ENCODE measurements at regions of chr11 and their contacts with region 1.

Region 1: GRCh38 chr11:129922674-129923073 is 27.3 kb upstream of the NFRKB start:
- DNase-seq: peak; percentile 30
- ATAC-seq: no peak; the same call in 1 of the 2 replicates
- H3K4me3 ChIP-seq: no peak overlapping the region
- H3K27ac ChIP-seq: no peak overlapping the region
- H3K4me1 ChIP-seq: peaks cover 8% of the 10 kb centered on the region
- H3K27me3 ChIP-seq: no peaks in the 10 kb centered on the region
- CTCF ChIP-seq: no peak

Region 2: GRCh38 chr11:129803533-129803932 is 119.1 kb before region 1 on chr11:
- CTCF ChIA-PET with region 1: no interaction called
- POLR2A ChIA-PET with region 1: no interaction called
- intact Hi-C with region 1: no loop called
- DNase-seq: peak; percentile 46
- ATAC-seq: peak; percentile 45
- H3K4me3 ChIP-seq: no peak overlapping the region
- H3K27ac ChIP-seq: peak overlapping the region; percentile 56
- H3K4me1 ChIP-seq: peaks cover 15% of the 10 kb centered on the region
- H3K27me3 ChIP-seq: no peaks in the 10 kb centered on the region
- CTCF ChIP-seq: no peak

Region 3: DNA sequence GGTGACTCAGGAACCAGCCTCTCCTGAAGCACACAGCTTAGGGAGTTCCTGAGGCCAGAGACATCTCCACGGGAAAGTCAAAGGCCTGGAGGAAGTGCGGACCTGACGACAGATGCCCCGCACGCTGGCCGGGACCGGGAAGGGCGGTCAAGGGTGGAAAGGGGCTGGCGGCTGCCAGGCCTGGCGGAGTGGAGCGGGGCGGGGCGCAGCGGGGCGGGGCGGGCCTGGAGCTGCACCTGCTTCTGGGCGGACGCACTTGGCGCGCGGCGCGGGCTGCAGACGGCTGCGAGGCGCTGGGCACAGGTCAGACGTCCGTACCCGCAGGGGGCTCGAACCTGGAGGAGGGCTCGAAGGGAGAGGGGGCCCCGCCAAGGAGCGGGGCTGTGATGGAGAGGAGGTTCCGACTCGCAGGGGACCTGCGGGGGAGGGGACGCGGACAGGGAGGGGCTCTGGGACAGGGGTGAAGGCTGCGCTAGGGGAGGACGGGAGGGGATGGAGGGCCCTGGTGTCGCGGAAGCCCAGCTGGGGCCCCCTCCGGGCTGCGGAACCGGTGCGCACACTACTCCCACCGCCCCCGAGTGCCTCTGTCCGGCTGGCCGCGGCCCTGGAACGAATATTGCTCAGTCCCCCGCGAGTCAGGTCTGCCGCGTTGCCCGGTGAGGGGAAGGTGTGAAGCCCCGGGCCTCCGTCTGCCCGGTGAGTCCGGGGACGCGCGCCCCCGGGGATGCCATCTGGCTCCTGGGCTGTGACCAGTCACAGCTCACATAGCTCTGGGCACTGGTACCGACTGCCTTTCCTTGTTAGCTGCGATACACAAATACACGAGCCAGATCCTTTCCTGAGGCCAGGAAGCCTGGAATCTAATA is 106.8 kb before region 1 on chr11 and contains the start of gene TMEM45B:
- CTCF ChIA-PET with region 1: no interaction called
- POLR2A ChIA-PET with region 1: no interaction called
- intact Hi-C with region 1: no loop called
- DNase-seq: peak; percentile 66
- ATAC-seq: peak; percentile 80
- H3K4me3 ChIP-seq: peak within 1 kb of the TSS; percentile 89
- H3K27ac ChIP-seq: peak within 1 kb of the TSS; percentile 58
- H3K4me1 ChIP-seq: peaks cover 35% of the 10 kb centered on the region
- H3K27me3 ChIP-seq: no peaks in the 10 kb centered on the region
- CTCF ChIP-seq: no peak
- total RNA-seq, gene TMEM45B: 24.0 and 30.4 TPM in 2 replicates

Region 4: GRCh38 chr11:130037058-130037457 is 114.4 kb after region 1 on chr11:
- CTCF ChIA-PET with region 1: no interaction called
- POLR2A ChIA-PET with region 1: no interaction called
- intact Hi-C with region 1: no loop called
- DNase-seq: peak; percentile 75
- ATAC-seq: peak; percentile 65
- H3K4me3 ChIP-seq: no peak overlapping the region
- H3K27ac ChIP-seq: peak overlapping the region; percentile 16; the same call in 1 of the 2 replicates
- H3K4me1 ChIP-seq: peaks cover 11% of the 10 kb centered on the region
- H3K27me3 ChIP-seq: no peaks in the 10 kb centered on the region
- CTCF ChIP-seq: no peak

Region 5: DNA sequence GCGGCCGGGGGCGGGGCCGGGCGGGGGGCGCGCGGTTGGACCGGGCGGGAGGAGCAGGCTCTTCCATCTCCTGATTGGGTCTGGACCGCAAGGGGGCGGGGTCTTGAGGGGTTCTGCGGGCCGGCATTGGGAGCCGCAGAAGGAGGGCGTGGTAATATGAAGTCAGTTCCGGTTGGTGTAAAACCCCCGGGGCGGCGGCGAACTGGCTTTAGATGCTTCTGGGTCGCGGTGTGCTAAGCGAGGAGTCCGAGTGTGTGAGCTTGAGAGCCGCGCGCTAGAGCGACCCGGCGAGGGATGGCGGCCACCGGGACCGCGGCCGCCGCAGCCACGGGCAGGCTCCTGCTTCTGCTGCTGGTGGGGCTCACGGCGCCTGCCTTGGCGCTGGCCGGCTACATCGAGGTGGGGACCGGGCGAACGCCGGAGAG is 147.0 kb after region 1 on chr11 and contains the start of gene APLP2:
- CTCF ChIA-PET with region 1: interaction called, 3 read pairs
- POLR2A ChIA-PET with region 1: no interaction called
- intact Hi-C with region 1: loop called (anchors 5 kb)
- DNase-seq: peak; percentile 99
- ATAC-seq: peak; percentile 77
- H3K4me3 ChIP-seq: peak within 1 kb of the TSS; percentile 78
- H3K27ac ChIP-seq: peak within 1 kb of the TSS; percentile 77
- H3K4me1 ChIP-seq: peaks cover 22% of the 10 kb centered on the region
- H3K27me3 ChIP-seq: no peaks in the 10 kb centered on the region
- CTCF ChIP-seq: no peak
- total RNA-seq, gene APLP2: 345 and 371 TPM in 2 replicates

Region 6: GRCh38 chr11:130145975-130146776 is 223.5 kb after region 1 on chr11:
- CTCF ChIA-PET with region 1: interaction called, 13 read pairs
- POLR2A ChIA-PET with region 1: no interaction called
- intact Hi-C with region 1: loop called (anchors 1 kb)
- DNase-seq: peak; percentile 99
- ATAC-seq: peak; percentile 97
- H3K4me3 ChIP-seq: no peak overlapping the region
- H3K27ac ChIP-seq: peak overlapping the region; percentile 89
- H3K4me1 ChIP-seq: peaks cover 34% of the 10 kb centered on the region
- H3K27me3 ChIP-seq: no peaks in the 10 kb centered on the region
- CTCF ChIP-seq: peak; percentile 77

Measured in PC-3 (cell line).